ENCODE measurements at regions of chr9 and their contacts with region 1.

Region 1: GRCh38 chr9:98074115-98074990 is 17.8 kb downstream of the NANS start:
- DNase-seq: peak; percentile 64
- H3K4me3 Mint-ChIP-seq: no peak overlapping the region
- H3K27ac Mint-ChIP-seq: peak overlapping the region; percentile 61
- H3K4me1 Mint-ChIP-seq: no peaks in the 10 kb centered on the region
- H3K27me3 Mint-ChIP-seq: no peaks in the 10 kb centered on the region
- CTCF ChIP-seq: peak; percentile 90

Region 2: GRCh38 chr9:98056269-98057137 is 17.9 kb before region 1 on chr9 and contains the start of gene NANS:
- CTCF ChIA-PET with region 1: interaction called, 18 read pairs
- POLR2A ChIA-PET with region 1: interaction called, 5 read pairs
- intact Hi-C with region 1: no loop called
- DNase-seq: peak; percentile 94
- H3K4me3 Mint-ChIP-seq: peak within 1 kb of the TSS; percentile 98
- H3K27ac Mint-ChIP-seq: peak within 1 kb of the TSS; percentile 97
- H3K4me1 Mint-ChIP-seq: peaks cover 4% of the 10 kb centered on the region
- H3K27me3 Mint-ChIP-seq: no peaks in the 10 kb centered on the region
- CTCF ChIP-seq: no peak
- total RNA-seq, gene NANS: 80.8 and 102 TPM in 2 replicates

Region 3: DNA sequence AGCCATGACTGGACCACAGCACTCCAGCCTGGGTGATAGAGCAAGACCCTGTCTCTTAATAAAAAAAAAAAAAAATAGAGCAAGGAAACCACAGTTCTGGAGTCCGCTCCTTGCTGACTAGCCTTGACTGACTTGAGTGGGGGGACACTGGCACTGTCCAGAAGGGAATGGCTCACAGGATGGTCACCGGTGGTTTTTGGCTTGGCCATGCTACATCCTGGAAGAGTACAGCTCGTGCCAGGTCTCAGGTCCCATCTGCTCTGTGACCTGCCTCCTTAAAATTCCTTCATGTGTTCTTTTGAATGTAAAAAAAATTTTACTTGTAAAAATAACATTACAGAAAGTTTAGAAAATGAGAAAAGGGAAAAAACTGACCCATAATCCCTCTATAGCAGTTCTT is 12.2 kb before region 1 on chr9:
- CTCF ChIA-PET with region 1: interaction called, 18 read pairs
- POLR2A ChIA-PET with region 1: interaction called, 4 read pairs
- intact Hi-C with region 1: no loop called
- DNase-seq: no peak
- H3K4me3 Mint-ChIP-seq: no peak overlapping the region
- H3K27ac Mint-ChIP-seq: no peak overlapping the region
- H3K4me1 Mint-ChIP-seq: peaks cover 4% of the 10 kb centered on the region
- H3K27me3 Mint-ChIP-seq: no peaks in the 10 kb centered on the region
- CTCF ChIP-seq: no peak

Region 4: DNA sequence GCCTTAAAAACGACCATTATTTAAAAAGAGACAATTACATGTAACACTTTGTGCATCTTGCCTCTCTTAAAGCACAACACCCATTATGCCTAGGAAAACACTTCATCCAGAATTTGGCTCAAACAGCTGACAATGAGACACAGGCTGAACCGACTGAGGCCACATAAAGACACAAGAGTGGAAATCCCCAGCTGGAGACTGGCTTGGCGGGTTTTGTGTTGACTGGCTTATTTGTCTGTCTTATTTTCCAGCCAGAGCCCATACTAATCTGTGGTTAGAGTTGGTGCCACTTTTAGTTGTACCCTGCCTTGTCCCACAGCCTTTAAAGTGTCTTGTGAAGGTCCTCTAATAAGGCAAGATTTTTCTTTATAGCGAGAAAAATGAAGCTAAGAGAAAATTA is 23.5 kb after region 1 on chr9:
- CTCF ChIA-PET with region 1: interaction called, 16 read pairs
- POLR2A ChIA-PET with region 1: no interaction called
- intact Hi-C with region 1: no loop called
- DNase-seq: no peak
- H3K4me3 Mint-ChIP-seq: no peak overlapping the region
- H3K27ac Mint-ChIP-seq: no peak overlapping the region
- H3K4me1 Mint-ChIP-seq: no peaks in the 10 kb centered on the region
- H3K27me3 Mint-ChIP-seq: no peaks in the 10 kb centered on the region
- CTCF ChIP-seq: no peak

Region 5: GRCh38 chr9:98108531-98109031 is 34.2 kb after region 1 on chr9:
- CTCF ChIA-PET with region 1: interaction called, 11 read pairs
- POLR2A ChIA-PET with region 1: interaction called, 3 read pairs
- intact Hi-C with region 1: no loop called
- DNase-seq: no peak
- H3K4me3 Mint-ChIP-seq: no peak overlapping the region
- H3K27ac Mint-ChIP-seq: no peak overlapping the region
- H3K4me1 Mint-ChIP-seq: no peaks in the 10 kb centered on the region
- H3K27me3 Mint-ChIP-seq: no peaks in the 10 kb centered on the region
- CTCF ChIP-seq: no peak

Region 6: DNA sequence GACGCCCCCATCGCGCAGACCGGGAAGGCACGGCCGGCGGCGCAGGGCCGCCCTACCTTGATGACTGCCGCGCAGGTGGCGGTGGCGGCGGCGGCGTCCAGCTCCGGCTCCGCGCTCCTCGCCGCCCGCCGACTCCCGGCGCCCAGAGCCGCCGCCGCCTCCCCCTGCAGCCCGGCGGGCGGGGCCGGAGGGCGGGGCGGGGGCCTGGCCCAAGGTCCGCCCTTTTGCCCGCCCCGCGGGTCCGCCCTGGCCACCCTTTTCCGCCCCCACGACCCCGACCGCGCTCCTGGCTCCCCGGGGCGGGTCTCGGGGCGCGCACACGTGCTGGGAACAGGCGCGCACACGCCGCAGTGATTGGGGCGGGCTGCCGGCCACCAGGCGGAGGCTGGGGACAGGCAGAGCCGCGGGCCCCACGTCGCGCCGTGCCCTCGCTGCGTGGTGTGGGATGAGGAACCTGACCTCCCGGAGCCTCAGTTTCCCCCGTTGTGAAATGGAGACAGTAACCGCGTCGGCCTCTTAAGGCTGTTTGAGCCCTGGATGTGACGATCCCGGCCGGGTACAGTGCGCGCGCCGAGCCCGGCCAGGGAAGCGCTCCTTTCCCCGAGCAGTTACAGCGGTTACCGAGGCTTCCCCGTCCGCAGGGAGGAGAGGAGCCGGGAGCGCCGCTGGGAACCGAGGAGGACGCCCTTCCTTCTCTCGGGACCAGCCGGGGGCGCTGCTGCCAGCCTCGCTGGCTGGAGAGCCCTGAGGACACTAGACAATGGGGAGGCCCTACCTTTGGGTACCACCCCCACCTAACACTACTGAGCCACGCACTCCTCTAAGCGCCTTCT is 118.4 kb after region 1 on chr9 and contains the start of gene CORO2A:
- CTCF ChIA-PET with region 1: interaction called, 11 read pairs
- POLR2A ChIA-PET with region 1: no interaction called
- intact Hi-C with region 1: loop called (anchors 2 kb)
- DNase-seq: peak; percentile 80
- H3K4me3 Mint-ChIP-seq: peak within 1 kb of the TSS; percentile 77
- H3K27ac Mint-ChIP-seq: no peak within 1 kb of the TSS
- H3K4me1 Mint-ChIP-seq: peaks cover 6% of the 10 kb centered on the region
- H3K27me3 Mint-ChIP-seq: no peaks in the 10 kb centered on the region
- CTCF ChIP-seq: peak; percentile 17
- total RNA-seq, gene CORO2A: 3.4 and 3.9 TPM in 2 replicates

Region 7: DNA sequence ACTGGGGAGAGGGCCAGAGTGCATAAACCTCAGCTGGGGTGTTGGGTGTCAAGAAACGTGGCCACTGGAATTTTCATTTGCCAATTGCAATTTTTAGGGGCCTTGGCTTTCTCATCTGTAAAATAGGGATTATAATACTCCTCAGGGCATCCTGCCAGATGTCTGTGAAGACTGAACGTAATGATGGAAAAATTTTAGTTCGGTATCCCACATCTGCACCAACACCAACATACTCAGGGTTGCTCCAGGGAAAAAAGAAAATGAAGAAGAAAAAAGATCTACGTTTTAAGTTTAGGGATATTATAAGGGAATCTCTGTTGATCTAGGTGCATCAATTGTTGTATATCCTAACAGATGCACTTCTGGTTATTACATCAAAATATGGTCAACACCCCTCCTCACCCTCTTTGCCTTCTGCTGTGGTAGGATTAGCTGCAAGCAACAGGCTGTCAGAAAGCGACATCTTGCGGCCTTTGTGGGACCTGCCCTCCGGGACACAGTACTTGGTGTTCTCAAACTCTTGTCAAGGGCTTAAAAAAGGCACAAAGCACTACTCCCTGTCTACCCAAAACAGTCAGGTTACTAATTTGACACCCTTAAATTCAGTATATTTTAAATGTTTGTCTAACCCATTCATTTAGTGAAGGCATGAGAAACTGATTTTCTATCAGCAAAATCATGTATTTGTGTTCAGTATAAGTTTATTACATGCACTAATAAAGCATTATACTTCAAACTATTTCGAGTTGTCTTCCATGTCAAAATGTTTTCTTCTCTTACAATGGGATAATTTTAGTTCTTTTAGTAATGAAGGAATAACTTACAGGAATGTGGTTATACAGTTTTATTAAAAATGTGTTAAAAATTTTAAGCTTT is 189.4 kb after region 1 on chr9:
- CTCF ChIA-PET with region 1: interaction called, 6 read pairs
- POLR2A ChIA-PET with region 1: no interaction called
- intact Hi-C with region 1: loop called (anchors 1 kb)
- DNase-seq: peak; percentile 83
- H3K4me3 Mint-ChIP-seq: no peak overlapping the region
- H3K27ac Mint-ChIP-seq: no peak overlapping the region
- H3K4me1 Mint-ChIP-seq: peaks cover 14% of the 10 kb centered on the region
- H3K27me3 Mint-ChIP-seq: no peaks in the 10 kb centered on the region
- CTCF ChIP-seq: peak; percentile 96

Measured in MCF 10A (cell line).